Calu3 (cell line): ENCODE measurements at regions of chr12 and their contacts with region 1.

Region 1: GRCh38 chr12:106247674-106248311 is at the start of gene CKAP4:
- DNase-seq: peak; percentile 84
- H3K4me3 Mint-ChIP-seq: peak within 1 kb of the TSS; percentile 77
- H3K27ac Mint-ChIP-seq: peak within 1 kb of the TSS; percentile 33
- H3K4me1 Mint-ChIP-seq: peaks cover 27% of the 10 kb centered on the region
- H3K27me3 Mint-ChIP-seq: no peaks in the 10 kb centered on the region
- CTCF ChIP-seq: no peak
- total RNA-seq, gene CKAP4: 91.9 and 108 TPM in 2 replicates

Region 2: DNA sequence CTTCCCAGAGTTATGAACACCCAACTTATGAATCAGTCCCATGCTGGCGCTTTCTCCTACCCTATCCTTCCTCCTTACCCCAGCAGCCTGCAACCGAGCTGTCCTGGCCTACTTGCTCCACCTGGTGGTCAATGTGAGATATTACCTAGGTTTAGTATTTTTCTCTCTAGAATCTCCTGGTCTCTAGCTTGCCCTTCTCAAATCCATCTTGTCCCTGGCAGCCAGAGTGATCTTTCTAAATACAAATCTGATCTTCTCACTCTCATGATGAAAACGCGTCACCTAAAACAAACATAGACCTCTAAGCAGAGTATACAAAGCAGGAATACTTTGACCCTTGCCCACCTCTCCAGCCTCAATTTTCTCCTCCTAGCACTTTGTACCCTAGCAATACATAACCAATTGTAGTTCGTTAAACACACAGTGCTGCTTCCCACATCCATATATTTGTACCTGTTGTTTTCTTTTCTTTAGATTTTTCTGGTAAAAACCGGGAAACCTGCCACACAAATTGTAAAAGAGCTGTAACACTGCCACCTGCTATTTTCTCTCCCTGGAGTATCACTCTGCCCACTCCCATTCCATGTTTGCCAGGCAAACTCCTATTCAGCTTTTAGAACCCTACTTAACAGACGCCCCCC is 34.8 kb after region 1 on chr12:
- CTCF ChIA-PET with region 1: interaction called, 3 read pairs
- intact Hi-C with region 1: loop called (anchors 2 kb)
- DNase-seq: peak; percentile 63
- H3K4me3 Mint-ChIP-seq: no peak overlapping the region
- H3K27ac Mint-ChIP-seq: peak overlapping the region; percentile 69
- H3K4me1 Mint-ChIP-seq: peaks cover 66% of the 10 kb centered on the region
- H3K27me3 Mint-ChIP-seq: no peaks in the 10 kb centered on the region
- CTCF ChIP-seq: peak; percentile 70

Region 3: GRCh38 chr12:106309671-106310505 is 62.1 kb after region 1 on chr12:
- CTCF ChIA-PET with region 1: no interaction called
- intact Hi-C with region 1: loop called (anchors 5 kb)
- DNase-seq: peak; percentile 47
- H3K4me3 Mint-ChIP-seq: peak overlapping the region; percentile 33
- H3K27ac Mint-ChIP-seq: peak overlapping the region; percentile 29
- H3K4me1 Mint-ChIP-seq: peaks cover 44% of the 10 kb centered on the region
- H3K27me3 Mint-ChIP-seq: no peaks in the 10 kb centered on the region
- CTCF ChIP-seq: no peak

Region 4: DNA sequence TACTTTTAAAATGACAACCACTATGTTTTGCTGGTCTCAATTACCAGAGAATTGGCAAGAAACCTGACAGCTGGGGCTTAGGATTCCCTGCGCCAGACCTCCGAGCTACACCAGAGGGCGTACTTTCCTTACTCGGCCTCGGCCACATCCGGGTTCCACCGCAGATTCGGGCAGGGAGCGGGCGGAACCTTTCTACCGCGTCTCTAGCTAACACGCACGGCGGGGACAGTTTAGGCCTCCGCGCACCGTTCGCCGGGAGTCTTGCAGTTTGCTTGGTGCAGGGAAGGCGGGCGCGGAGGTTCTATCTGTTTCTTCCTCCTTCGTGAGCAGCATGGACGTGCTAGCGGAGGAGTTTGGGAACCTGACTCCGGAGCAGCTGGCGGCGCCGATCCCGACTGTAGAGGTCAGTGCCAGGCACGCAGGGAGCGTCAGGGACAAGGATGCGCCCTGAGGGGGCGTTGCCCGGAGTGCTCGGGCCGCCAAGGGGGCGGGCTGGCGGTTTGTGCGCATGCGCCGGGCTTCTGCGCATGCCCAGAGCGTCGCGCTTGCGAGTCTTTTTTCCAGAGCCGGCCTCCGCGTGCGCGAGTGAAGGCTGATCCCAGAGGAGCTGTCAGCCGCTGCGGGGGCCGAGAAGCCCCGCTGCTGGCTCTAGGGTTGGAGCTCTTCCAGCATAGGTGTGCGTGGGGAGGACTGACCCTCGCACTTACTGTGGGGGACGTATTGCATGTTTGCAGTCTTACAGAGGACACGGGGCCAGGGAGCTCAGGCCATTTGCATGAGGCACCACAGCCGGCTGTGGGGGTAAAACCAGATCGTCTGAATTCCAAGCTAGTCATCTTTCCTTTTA is 110.0 kb after region 1 on chr12 and contains the start of gene POLR3B:
- CTCF ChIA-PET with region 1: no interaction called
- intact Hi-C with region 1: loop called (anchors 5 kb)
- DNase-seq: peak; percentile 97
- H3K4me3 Mint-ChIP-seq: peak within 1 kb of the TSS; percentile 84
- H3K27ac Mint-ChIP-seq: peak within 1 kb of the TSS; percentile 97
- H3K4me1 Mint-ChIP-seq: peaks cover 17% of the 10 kb centered on the region
- H3K27me3 Mint-ChIP-seq: no peaks in the 10 kb centered on the region
- CTCF ChIP-seq: peak; percentile 83
- total RNA-seq, gene POLR3B: 13.6 and 13.9 TPM in 2 replicates